Right ventricle myocardium inferior (tissue), 1 donor: ENCODE measurements at regions of chr15 and their contacts with region 1.

Region 1: DNA sequence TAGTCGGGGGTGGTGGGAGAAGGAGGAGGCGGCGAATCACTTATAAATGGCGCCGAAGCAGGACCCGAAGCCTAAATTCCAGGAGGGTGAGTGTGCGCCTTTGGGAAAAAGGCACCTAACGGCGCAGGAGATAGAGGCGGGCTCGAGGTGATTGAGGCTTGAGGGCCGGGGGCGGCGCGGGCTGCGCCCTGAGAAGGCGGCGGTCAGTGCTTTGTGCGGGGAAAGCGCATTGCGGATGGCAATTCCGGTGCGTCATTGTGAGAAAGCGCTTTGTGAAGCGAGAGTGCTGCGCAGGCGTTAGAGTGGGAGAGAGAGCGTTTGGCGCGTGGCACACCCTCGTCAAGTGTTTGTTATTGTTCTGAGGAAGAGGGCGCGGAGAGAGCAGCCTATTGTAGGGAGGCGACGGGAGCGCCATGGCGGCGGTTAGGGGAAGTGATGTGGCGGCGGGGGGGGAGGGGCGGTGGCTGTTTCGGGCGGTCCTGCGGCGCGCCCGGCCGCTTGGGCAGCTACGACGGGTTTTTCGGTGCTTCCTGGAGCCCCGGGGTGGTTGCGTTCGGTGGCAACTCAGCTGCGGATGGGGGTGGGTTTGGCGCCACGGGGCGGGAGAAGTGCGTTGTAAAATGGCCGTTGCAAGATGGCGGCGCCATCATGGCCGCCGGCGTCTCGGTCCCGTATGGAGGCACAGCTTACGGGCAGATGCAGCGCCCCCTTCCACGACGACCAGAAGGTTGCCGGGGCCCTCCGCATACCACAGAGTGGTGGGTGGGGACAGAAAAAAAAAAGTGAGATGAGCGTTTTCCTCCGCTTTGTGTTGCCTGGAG is 492 bp downstream of the MORF4L1 start:
- DNase-seq: peak; percentile 95
- ATAC-seq: peak; percentile 82

Region 2: DNA sequence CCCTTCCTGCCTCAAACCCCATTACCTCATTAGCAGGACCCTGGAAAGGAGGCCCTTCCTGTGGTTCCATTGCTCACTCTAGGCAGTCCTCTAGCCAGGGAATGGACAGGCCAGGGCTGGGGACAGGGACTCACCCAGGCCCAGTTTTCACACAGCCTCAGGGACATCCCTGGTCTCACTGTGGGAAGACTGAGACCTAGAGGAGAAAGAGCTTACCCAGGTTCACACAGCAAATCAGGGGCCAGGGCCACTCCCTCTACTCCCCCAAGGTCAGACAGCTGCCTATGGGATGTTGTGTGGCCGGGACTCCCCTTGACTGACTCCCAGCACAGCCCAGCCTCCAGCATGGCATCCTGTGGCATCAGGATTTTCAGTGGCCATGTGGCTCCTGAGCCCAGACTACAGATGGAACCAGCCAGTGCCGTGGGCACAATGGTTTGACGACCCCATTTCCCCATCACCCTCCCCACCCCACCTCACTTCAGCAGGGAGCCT is 111.2 kb before region 1 on chr15:
- intact Hi-C with region 1: loop called (anchors 2 kb)
- DNase-seq: no peak
- ATAC-seq: no peak

Region 3: GRCh38 chr15:79041601-79042168 is 168.5 kb after region 1 on chr15:
- intact Hi-C with region 1: no loop called
- DNase-seq: no peak
- ATAC-seq: no peak